B cell (primary cell): ENCODE measurements at regions of chr3 and their contacts with region 1.

Region 1: DNA sequence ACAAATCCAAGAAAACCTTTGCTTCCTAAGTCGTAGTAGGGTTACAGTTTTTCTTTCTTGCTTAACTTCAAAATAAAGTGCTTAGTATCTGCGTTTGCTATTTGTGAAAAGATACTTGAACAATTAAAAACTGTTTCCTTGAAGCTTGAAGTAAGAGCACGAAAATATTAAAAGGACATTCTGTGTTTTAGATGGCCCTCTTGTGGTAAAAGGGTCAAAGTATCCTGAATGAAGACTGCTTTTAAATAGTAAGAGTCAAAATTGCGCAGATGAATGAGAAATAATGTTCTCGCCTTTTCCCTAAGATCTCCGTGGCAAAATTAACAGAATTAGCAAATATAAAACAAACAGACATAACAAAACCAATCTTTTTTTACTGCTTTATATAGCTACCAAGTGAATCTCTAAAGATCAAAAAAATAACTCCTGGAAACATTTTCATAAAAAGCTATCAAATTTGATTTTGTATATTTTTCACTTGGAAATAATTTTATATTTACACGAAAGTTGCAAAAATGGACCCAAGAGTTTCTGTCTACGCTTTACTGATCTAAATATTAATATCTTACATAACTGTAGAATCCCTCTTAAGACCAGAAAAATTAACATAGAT is 175.4 kb downstream of the MBNL1 start:
- DNase-seq: peak; percentile 67
- ATAC-seq: peak; percentile 62
- H3K4me3 ChIP-seq: no peak overlapping the region
- H3K4me3 Mint-ChIP-seq: no peak overlapping the region
- H3K27ac ChIP-seq: peak overlapping the region in 1 of 2 donors; percentile 63
- H3K27ac Mint-ChIP-seq: peak overlapping the region; percentile 0
- H3K4me1 ChIP-seq: peaks cover 5 to 16% of the 10 kb centered on the region in 2 donors
- H3K4me1 Mint-ChIP-seq: peaks cover 55% of the 10 kb centered on the region
- H3K27me3 ChIP-seq: no peaks in the 10 kb centered on the region
- H3K27me3 Mint-ChIP-seq: no peaks in the 10 kb centered on the region
- CTCF ChIP-seq: peak; percentile 79

Region 2: DNA sequence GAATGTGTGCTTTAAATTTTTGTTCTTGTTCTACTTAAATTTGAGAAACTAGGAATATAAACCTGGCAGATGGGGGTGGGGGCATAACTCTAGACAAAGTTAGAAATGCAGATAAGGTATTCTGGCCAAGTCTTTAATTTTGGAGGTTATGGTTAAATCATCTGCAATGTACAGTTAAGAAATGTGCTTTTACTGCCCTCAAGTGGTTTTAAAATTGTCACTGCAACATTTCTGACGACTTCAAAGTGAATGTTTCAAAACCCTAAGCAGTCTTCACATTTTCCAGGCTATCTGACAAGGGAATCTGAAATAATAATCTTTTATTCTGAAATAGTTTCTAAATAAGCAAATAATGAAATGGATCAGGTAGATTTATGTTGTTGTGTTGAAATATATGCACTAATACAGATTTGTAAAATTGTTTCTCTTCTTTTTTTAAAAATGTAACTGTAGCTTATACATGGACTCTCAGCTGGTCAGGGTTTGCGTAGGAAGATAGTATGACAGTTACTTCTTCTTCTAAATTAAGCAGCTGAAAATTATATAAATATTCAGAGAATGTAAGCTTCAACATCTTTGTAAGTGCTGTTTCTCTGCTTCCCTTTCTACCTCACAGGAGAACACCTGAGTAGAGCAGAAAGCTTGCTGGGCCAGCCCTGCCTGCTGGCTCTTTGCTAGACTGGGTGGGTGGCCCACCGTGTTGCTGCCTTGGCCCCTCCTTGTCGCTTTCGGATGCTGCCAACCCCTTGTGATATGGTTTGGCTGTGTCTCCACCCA is 525.7 kb before region 1 on chr3:
- CTCF ChIA-PET with region 1: interaction called, 10 read pairs
- POLR2A ChIA-PET with region 1: no interaction called
- intact Hi-C with region 1: no loop called
- DNase-seq: peak; percentile 40
- ATAC-seq: no peak
- H3K4me3 ChIP-seq: no peak overlapping the region
- H3K4me3 Mint-ChIP-seq: no peak overlapping the region
- H3K27ac ChIP-seq: no peak overlapping the region
- H3K27ac Mint-ChIP-seq: no peak overlapping the region
- H3K4me1 ChIP-seq: no peaks in the 10 kb centered on the region
- H3K4me1 Mint-ChIP-seq: no peaks in the 10 kb centered on the region
- H3K27me3 ChIP-seq: no peaks in the 10 kb centered on the region
- H3K27me3 Mint-ChIP-seq: no peaks in the 10 kb centered on the region
- CTCF ChIP-seq: peak; percentile 65

Region 3: DNA sequence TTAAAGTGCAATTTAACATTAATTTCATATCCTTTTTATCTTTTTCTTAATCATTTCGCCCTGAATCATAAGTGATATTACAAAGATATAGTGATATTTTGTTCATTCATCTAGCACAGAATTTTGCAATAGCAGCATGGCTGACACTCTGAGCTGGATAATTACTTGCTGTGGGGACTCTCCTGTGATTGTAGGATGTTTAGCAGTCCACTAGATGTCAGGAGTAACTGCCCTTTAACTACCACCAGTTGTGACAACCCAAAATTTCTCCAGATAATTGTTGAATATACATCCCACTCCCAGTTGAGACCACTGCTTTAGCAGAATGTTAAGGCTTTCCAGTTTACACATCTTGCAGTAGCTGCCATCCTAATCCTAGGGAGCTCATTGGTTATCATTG is 372.2 kb before region 1 on chr3:
- CTCF ChIA-PET with region 1: interaction called, 35 read pairs
- POLR2A ChIA-PET with region 1: no interaction called
- intact Hi-C with region 1: loop called (anchors 1 kb)
- DNase-seq: peak; percentile 30
- ATAC-seq: no peak
- H3K4me3 ChIP-seq: no peak overlapping the region
- H3K4me3 Mint-ChIP-seq: no peak overlapping the region
- H3K27ac ChIP-seq: no peak overlapping the region
- H3K27ac Mint-ChIP-seq: no peak overlapping the region
- H3K4me1 ChIP-seq: no peaks in the 10 kb centered on the region
- H3K4me1 Mint-ChIP-seq: no peaks in the 10 kb centered on the region
- H3K27me3 ChIP-seq: peaks cover 0 to 3% (median 0%) of the 10 kb centered on the region in 4 experiments
- H3K27me3 Mint-ChIP-seq: no peaks in the 10 kb centered on the region
- CTCF ChIP-seq: peak; percentile 49

Region 4: GRCh38 chr3:152205097-152205593 is 239.0 kb before region 1 on chr3:
- CTCF ChIA-PET with region 1: interaction called, 10 read pairs
- POLR2A ChIA-PET with region 1: no interaction called
- intact Hi-C with region 1: no loop called
- DNase-seq: peak; percentile 87
- ATAC-seq: peak; percentile 82
- H3K4me3 ChIP-seq: peak overlapping the region; percentile 66 to 97 (median 72)
- H3K4me3 Mint-ChIP-seq: peak overlapping the region; percentile 95
- H3K27ac ChIP-seq: peak overlapping the region; percentile 83 to 92
- H3K27ac Mint-ChIP-seq: peak overlapping the region; percentile 96
- H3K4me1 ChIP-seq: peaks cover 21 to 40% of the 10 kb centered on the region in 2 donors
- H3K4me1 Mint-ChIP-seq: peaks cover 46% of the 10 kb centered on the region
- H3K27me3 ChIP-seq: no peaks in the 10 kb centered on the region
- H3K27me3 Mint-ChIP-seq: no peaks in the 10 kb centered on the region
- CTCF ChIP-seq: no peak

Region 5: GRCh38 chr3:152384412-152384811 is 59.7 kb before region 1 on chr3:
- CTCF ChIA-PET with region 1: no interaction called
- POLR2A ChIA-PET with region 1: no interaction called
- intact Hi-C with region 1: no loop called
- DNase-seq: no peak
- ATAC-seq: no peak
- H3K4me3 ChIP-seq: no peak overlapping the region
- H3K4me3 Mint-ChIP-seq: no peak overlapping the region
- H3K27ac ChIP-seq: peak overlapping the region in 1 of 2 donors; percentile 15
- H3K27ac Mint-ChIP-seq: peak overlapping the region; percentile 15
- H3K4me1 ChIP-seq: peaks cover 21 to 51% of the 10 kb centered on the region in 2 donors
- H3K4me1 Mint-ChIP-seq: peaks cover 69% of the 10 kb centered on the region
- H3K27me3 ChIP-seq: no peaks in the 10 kb centered on the region
- H3K27me3 Mint-ChIP-seq: no peaks in the 10 kb centered on the region
- CTCF ChIP-seq: no peak

Region 6: GRCh38 chr3:152419748-152420147 is 24.4 kb before region 1 on chr3:
- CTCF ChIA-PET with region 1: interaction called, 11 read pairs
- POLR2A ChIA-PET with region 1: no interaction called
- intact Hi-C with region 1: no loop called
- DNase-seq: no peak
- ATAC-seq: no peak
- H3K4me3 ChIP-seq: no peak overlapping the region
- H3K4me3 Mint-ChIP-seq: no peak overlapping the region
- H3K27ac ChIP-seq: peak overlapping the region in 1 of 2 donors; percentile 19
- H3K27ac Mint-ChIP-seq: peak overlapping the region; percentile 41
- H3K4me1 ChIP-seq: no peaks in the 10 kb centered on the region
- H3K4me1 Mint-ChIP-seq: peaks cover 36% of the 10 kb centered on the region
- H3K27me3 ChIP-seq: no peaks in the 10 kb centered on the region
- H3K27me3 Mint-ChIP-seq: no peaks in the 10 kb centered on the region
- CTCF ChIP-seq: no peak

Region 7: GRCh38 chr3:152785051-152785450 is 340.9 kb after region 1 on chr3:
- CTCF ChIA-PET with region 1: no interaction called
- POLR2A ChIA-PET with region 1: no interaction called
- intact Hi-C with region 1: no loop called
- DNase-seq: no peak
- ATAC-seq: no peak
- H3K4me3 ChIP-seq: no peak overlapping the region
- H3K4me3 Mint-ChIP-seq: no peak overlapping the region
- H3K27ac ChIP-seq: no peak overlapping the region
- H3K27ac Mint-ChIP-seq: no peak overlapping the region
- H3K4me1 ChIP-seq: no peaks in the 10 kb centered on the region
- H3K4me1 Mint-ChIP-seq: no peaks in the 10 kb centered on the region
- H3K27me3 ChIP-seq: no peaks in the 10 kb centered on the region
- H3K27me3 Mint-ChIP-seq: no peaks in the 10 kb centered on the region
- CTCF ChIP-seq: no peak